A673 (cell line): ENCODE measurements at regions of chr7 and their contacts with region 1.

Region 1: DNA sequence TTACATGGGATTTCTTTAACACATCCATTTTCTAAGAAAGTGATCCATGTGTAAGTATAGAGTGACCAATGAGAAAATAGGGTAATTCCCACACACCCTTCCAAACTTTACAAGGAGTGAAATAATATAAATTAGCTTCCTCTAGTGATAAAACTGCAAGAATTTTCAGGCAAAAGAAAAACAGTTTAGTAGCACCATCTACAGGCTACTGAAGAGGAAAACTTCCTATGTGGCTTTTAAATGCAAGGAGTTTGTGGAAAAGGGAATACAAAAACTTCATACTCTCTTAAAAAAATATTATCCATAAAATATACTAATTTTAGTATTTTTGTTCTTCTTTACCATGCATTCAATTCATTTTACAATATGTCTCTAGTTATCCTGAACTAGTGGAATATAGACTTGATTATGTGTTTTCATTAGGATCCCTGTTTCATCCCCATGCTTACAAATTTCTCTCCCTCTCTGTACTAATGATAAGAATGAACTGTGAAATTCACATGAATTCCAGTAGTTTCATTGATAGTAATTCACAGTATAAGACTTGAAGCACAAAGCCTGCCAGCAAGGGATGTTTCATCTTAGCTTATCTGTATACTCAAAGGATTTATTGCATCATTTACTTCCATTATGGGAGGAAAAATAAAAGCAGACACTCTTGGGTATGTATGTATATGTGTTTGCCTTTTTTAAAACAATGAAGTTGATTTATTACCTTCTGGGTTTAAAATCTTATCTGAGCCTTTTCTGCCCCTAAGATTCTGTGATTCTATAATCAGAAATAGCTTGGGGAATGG is 442.9 kb downstream of the AUTS2 start:
- DNase-seq: peak; percentile 68
- H3K4me3 ChIP-seq: no peak overlapping the region
- H3K27ac ChIP-seq: peak overlapping the region; percentile 55
- H3K4me1 ChIP-seq: peaks cover 44% of the 10 kb centered on the region
- H3K27me3 ChIP-seq: no peaks in the 10 kb centered on the region
- CTCF ChIP-seq: peak; percentile 70

Region 2: GRCh38 chr7:68676813-68677535 is 1364.2 kb before region 1 on chr7:
- CTCF ChIA-PET with region 1: interaction called, 11 read pairs
- POLR2A ChIA-PET with region 1: no interaction called
- intact Hi-C with region 1: loop called (anchors 5 kb)
- DNase-seq: peak; percentile 84
- H3K4me3 ChIP-seq: no peak overlapping the region
- H3K27ac ChIP-seq: peak overlapping the region; percentile 91
- H3K4me1 ChIP-seq: peaks cover 53% of the 10 kb centered on the region
- H3K27me3 ChIP-seq: no peaks in the 10 kb centered on the region
- CTCF ChIP-seq: no peak

Region 3: GRCh38 chr7:69199041-69199440 is 842.1 kb before region 1 on chr7:
- CTCF ChIA-PET with region 1: interaction called, 3 read pairs
- POLR2A ChIA-PET with region 1: no interaction called
- intact Hi-C with region 1: loop called (anchors 5 kb)
- DNase-seq: no peak
- H3K4me3 ChIP-seq: no peak overlapping the region
- H3K27ac ChIP-seq: peak overlapping the region; percentile 90
- H3K4me1 ChIP-seq: peaks cover 7% of the 10 kb centered on the region
- H3K27me3 ChIP-seq: no peaks in the 10 kb centered on the region
- CTCF ChIP-seq: no peak

Region 4: GRCh38 chr7:69246758-69247157 is 794.4 kb before region 1 on chr7:
- CTCF ChIA-PET with region 1: no interaction called
- POLR2A ChIA-PET with region 1: no interaction called
- intact Hi-C with region 1: no loop called
- DNase-seq: no peak
- H3K4me3 ChIP-seq: no peak overlapping the region
- H3K27ac ChIP-seq: no peak overlapping the region
- H3K4me1 ChIP-seq: no peaks in the 10 kb centered on the region
- H3K27me3 ChIP-seq: no peaks in the 10 kb centered on the region
- CTCF ChIP-seq: no peak

Region 5: DNA sequence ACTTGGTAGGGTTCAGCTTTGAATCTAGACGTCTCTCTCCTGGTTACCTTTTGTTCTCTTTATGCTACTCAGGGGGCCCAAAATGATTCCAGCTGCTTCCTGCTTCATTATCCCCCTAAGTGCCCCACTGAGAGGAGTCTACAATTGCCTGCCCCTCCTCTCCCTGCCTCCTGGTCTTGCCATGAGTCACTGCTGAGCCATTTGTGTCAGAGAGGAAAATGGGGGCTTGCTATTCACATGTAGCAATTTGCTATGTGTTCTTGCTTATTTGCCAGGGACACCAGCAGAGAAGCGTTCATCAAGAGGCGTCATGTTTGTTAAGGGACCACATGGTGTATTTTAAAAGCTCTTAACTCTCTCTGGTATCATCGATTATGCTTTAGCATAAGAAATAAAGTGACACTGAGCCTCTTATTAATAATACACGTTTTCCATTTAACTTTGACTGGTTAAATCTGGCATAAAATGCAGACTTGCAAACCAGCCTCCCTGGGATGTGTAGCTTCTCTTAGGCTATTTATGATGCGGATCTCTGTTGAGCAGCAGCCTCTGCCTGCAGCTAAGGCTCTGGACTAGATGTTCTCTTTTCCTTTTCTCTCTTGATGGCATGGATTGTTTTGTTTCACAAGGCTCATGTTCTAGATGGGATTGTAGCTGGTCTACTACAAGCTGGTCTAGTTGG is 203.6 kb before region 1 on chr7:
- CTCF ChIA-PET with region 1: no interaction called
- POLR2A ChIA-PET with region 1: no interaction called
- intact Hi-C with region 1: loop called (anchors 10 kb)
- DNase-seq: peak; percentile 98
- H3K4me3 ChIP-seq: no peak overlapping the region
- H3K27ac ChIP-seq: peak overlapping the region; percentile 24
- H3K4me1 ChIP-seq: peaks cover 56% of the 10 kb centered on the region
- H3K27me3 ChIP-seq: no peaks in the 10 kb centered on the region
- CTCF ChIP-seq: no peak

Region 6: GRCh38 chr7:69992938-69993337 is 48.2 kb before region 1 on chr7:
- CTCF ChIA-PET with region 1: no interaction called
- POLR2A ChIA-PET with region 1: no interaction called
- intact Hi-C with region 1: no loop called
- DNase-seq: no peak
- H3K4me3 ChIP-seq: no peak overlapping the region
- H3K27ac ChIP-seq: no peak overlapping the region
- H3K4me1 ChIP-seq: peaks cover 11% of the 10 kb centered on the region
- H3K27me3 ChIP-seq: no peaks in the 10 kb centered on the region
- CTCF ChIP-seq: no peak

Region 7: GRCh38 chr7:70156057-70156456 is 114.9 kb after region 1 on chr7:
- CTCF ChIA-PET with region 1: interaction called, 31 read pairs
- POLR2A ChIA-PET with region 1: no interaction called
- intact Hi-C with region 1: loop called (anchors 1 kb)
- DNase-seq: no peak
- H3K4me3 ChIP-seq: no peak overlapping the region
- H3K27ac ChIP-seq: no peak overlapping the region
- H3K4me1 ChIP-seq: peaks cover 4% of the 10 kb centered on the region
- H3K27me3 ChIP-seq: no peaks in the 10 kb centered on the region
- CTCF ChIP-seq: no peak